Heart right ventricle (tissue), 16 donors: ENCODE measurements at regions of chr11 and their contacts with region 1.

Region 1: GRCh38 chr11:65366340-65366773 is 11.8 kb downstream of the TIGD3 start:
- DNase-seq: peak in 1 of 2 donors; percentile 50
- ATAC-seq: peak; percentile 53 to 73 (median 69)
- H3K4me3 ChIP-seq: no peak overlapping the region
- H3K27ac ChIP-seq: peak overlapping the region in 9 of 10 donors; percentile 13 to 68 (median 45)
- H3K4me1 ChIP-seq: peaks cover 0 to 33% (median 19%) of the 10 kb centered on the region in 9 donors
- H3K27me3 ChIP-seq: no peaks in the 10 kb centered on the region
- CTCF ChIP-seq: peak; percentile 64 to 84 (median 82)

Region 2: GRCh38 chr11:65471410-65471762 is 105.0 kb after region 1 on chr11:
- intact Hi-C with region 1: loop called in 3 of 10 experiments (anchors 5 to 10 kb)
- DNase-seq: peak; percentile 81 to 85
- ATAC-seq: peak; percentile 85 to 94 (median 90)
- H3K4me3 ChIP-seq: peak overlapping the region in 9 of 10 donors; percentile 10 to 44 (median 33)
- H3K27ac ChIP-seq: peak overlapping the region; percentile 86 to 100 (median 98)
- H3K4me1 ChIP-seq: peaks cover 16 to 57% (median 41%) of the 10 kb centered on the region in 9 donors
- H3K27me3 ChIP-seq: no peaks in the 10 kb centered on the region
- CTCF ChIP-seq: peak; percentile 49 to 84 (median 72)